T-cell (primary cell): ENCODE measurements at regions of chr3 and their contacts with region 1.

Region 1: DNA sequence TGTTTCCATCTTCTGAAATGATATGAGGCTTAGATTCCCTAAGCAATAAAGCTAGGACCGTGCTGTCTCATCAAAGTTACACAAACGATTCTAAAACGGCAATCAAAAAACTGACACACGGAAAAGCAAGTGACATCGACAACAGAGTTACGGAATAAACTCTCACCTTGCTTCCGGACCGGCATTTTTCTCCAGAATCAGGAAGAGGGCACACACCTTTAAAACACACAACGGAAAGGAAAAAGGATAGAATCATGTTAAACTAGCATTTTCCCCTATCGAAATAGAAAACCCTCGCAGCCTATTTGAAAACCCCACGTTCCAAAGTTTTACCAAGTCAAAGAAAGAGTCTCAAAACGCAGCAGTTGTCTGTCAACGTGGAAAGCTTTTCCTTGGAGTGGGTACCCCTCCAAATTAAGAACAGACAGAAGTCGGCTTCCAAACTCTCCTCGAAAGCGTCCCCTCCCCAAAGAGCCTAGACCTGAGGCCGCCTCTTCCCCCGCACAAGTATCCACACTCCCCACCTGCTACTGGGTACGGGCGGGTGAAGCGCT is 1.3 kb downstream of the DLG1 start:
- DNase-seq: peak in 2 of 35 experiments; percentile 2 to 33
- ATAC-seq: peak in 3 of 4 experiments; percentile 4 to 10 (median 5)
- H3K4me3 ChIP-seq: peak overlapping the region; percentile 75 to 88
- H3K4me3 Mint-ChIP-seq: peak overlapping the region; percentile 91 to 95 (median 93)
- H3K27ac ChIP-seq: peak overlapping the region; percentile 46
- H3K27ac Mint-ChIP-seq: peak overlapping the region; percentile 89 to 91
- H3K4me1 ChIP-seq: peaks cover 13 to 19% of the 10 kb centered on the region in 2 experiments
- H3K4me1 Mint-ChIP-seq: peaks cover 45 to 53% (median 48%) of the 10 kb centered on the region in 3 donors
- H3K27me3 ChIP-seq: peaks cover 3 to 5% of the 10 kb centered on the region in 2 experiments
- H3K27me3 Mint-ChIP-seq: peaks cover 6 to 9% of the 10 kb centered on the region in 2 donors

Region 2: DNA sequence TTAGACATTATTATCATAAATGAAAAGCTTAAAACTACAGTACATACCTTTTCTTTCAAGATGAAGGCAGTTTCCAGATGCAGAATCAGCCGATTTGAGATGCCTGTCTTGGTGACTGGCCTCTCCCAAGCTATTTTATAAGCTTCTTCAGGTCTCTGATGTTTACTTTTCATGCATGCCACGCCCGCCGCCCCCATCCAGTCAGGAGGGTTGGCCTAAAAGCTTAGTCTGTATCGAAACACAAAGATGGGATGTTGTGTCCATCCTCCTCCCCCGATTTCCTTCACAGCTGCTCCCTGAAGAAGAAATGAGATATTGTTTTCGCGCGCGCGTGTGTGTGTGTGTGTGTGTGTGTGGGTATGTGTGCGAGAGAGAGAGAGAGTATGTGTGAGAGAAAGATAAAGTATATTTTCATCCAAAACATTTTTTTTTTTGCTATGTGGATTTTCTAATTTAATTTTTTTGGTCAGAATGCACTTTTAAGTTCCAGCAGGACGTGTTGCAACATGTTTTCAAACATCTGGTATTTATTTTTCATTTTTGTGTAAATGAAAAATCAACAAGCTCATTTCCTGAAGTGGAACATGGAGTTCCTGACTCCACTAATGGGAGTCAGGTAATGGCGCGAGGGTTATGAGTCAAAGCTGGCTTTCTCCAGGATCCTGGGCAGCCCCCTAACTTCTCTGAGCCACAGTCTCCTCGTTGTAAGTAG is 1713.1 kb before region 1 on chr3 and contains the start of gene APOD:
- CTCF ChIA-PET with region 1: no interaction called
- POLR2A ChIA-PET with region 1: no interaction called
- DNase-seq: no peak
- ATAC-seq: no peak
- H3K4me3 ChIP-seq: no peak within 1 kb of the TSS
- H3K4me3 Mint-ChIP-seq: no peak within 1 kb of the TSS
- H3K27ac ChIP-seq: no peak within 1 kb of the TSS
- H3K27ac Mint-ChIP-seq: no peak within 1 kb of the TSS
- H3K4me1 ChIP-seq: peaks cover 14 to 15% of the 10 kb centered on the region in 2 experiments
- H3K4me1 Mint-ChIP-seq: peaks cover 0 to 5% (median 3%) of the 10 kb centered on the region in 3 donors
- H3K27me3 ChIP-seq: peaks cover 0 to 4% of the 10 kb centered on the region in 2 experiments
- H3K27me3 Mint-ChIP-seq: no peaks in the 10 kb centered on the region
- total RNA-seq, gene APOD: 0.55 TPM in 1 of 5 donors, not detected in the others

Region 3: DNA sequence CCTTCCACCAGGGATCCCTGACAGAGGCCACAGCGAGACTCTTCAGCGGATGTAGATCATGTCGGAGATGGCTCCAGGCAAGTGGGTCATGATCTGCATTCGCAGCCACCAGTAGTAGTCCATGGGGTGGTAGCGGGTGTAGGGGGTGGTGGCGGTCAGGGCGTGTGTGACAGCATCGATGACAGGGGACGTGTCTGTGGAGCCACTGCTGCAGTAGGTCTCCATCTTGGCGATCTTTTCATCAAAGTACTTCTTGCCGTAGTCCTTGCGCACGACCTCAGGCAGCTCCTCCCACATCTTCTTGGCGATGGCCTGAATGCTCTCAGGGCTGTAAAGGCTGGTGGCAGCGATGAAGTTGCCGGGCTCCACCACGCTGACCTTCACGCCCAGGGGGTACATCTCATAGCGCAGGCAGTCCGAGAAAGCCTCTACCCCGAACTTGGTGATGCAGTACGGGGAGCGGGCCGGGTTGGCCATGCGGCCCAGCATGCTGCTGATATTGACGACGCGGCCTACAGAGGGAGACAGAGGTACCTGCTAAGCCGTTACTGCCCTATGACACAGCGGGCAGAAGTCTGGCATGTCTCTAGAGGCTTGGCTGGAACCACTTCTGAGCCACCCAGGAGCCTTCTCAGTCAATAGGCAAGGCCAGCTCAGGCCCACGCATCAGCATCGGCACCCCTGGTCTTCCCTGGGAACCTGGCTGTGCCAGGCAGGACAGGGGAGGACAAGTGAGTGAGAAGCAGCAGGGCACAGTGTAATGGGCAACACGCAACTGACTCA is 214.9 kb after region 1 on chr3:
- CTCF ChIA-PET with region 1: interaction called in 1 of 2 experiments, 10 read pairs
- POLR2A ChIA-PET with region 1: no interaction called
- DNase-seq: no peak
- ATAC-seq: no peak
- H3K4me3 ChIP-seq: no peak overlapping the region
- H3K4me3 Mint-ChIP-seq: no peak overlapping the region
- H3K27ac ChIP-seq: no peak overlapping the region
- H3K27ac Mint-ChIP-seq: peak overlapping the region in 1 of 2 donors; percentile 28
- H3K4me1 ChIP-seq: peaks cover 0 to 19% of the 10 kb centered on the region in 2 experiments
- H3K4me1 Mint-ChIP-seq: peaks cover 12 to 18% (median 16%) of the 10 kb centered on the region in 3 donors
- H3K27me3 ChIP-seq: peaks cover 0 to 8% of the 10 kb centered on the region in 2 experiments
- H3K27me3 Mint-ChIP-seq: no peaks in the 10 kb centered on the region